WTC11 (cell line): ENCODE measurements at regions of chr3 and their contacts with region 1.

Region 1: DNA sequence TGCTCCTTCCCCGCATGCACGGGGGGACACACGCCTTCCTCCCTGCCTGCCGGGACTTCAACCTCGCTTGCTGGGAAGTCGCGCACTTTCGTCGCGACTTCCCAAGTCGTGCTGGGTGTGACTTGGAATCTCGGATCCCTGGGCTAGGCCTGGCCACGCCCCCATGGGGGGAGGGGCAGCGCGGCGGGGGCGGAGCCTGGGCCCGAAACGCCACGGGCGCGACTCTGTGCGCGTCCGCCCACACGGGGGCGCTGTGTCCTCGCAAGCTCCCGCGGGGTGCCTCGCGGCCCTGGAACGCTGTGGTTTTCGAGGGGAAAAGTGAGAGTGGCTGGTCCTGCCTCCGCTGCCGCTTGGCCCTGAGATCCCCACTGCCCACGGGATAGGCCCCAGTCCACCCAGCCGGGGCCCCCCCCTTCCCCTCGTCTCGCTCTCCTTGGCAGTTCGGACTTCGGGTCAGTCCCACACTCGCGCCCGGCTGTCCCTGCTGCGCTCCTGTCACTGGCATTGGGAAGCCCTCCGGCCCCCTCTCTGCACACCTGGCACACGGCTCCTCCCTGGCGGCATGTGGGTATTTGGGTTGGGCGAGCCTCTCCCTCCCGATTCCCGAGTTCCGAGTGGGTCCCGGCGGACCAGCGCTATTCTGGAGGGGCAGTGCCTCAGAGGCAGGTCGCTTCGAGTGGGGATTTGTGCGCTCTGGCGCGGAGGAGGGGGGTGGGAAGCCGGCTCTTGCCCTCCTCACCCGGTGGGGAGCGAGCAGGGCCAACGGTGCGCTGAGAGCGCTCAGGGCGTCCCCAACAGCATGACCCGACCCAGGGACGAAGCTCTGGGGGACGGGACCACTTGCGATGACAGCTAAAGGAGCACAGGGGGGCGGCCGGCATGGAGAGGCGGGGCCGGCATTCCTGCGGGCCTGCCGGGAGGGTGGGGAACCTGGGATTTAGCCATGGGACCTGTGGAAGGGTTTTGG is 23.6 kb downstream of the SEC61A1 start:
- DNase-seq: peak; percentile 91
- ATAC-seq: peak; percentile 79
- H3K4me3 Mint-ChIP-seq: peak overlapping the region; percentile 77
- H3K27ac Mint-ChIP-seq: peak overlapping the region; percentile 91
- H3K4me1 Mint-ChIP-seq: peaks cover 12% of the 10 kb centered on the region
- H3K27me3 Mint-ChIP-seq: no peaks in the 10 kb centered on the region; the same call in 1 of the 2 replicates
- CTCF ChIP-seq: peak; percentile 94

Region 2: DNA sequence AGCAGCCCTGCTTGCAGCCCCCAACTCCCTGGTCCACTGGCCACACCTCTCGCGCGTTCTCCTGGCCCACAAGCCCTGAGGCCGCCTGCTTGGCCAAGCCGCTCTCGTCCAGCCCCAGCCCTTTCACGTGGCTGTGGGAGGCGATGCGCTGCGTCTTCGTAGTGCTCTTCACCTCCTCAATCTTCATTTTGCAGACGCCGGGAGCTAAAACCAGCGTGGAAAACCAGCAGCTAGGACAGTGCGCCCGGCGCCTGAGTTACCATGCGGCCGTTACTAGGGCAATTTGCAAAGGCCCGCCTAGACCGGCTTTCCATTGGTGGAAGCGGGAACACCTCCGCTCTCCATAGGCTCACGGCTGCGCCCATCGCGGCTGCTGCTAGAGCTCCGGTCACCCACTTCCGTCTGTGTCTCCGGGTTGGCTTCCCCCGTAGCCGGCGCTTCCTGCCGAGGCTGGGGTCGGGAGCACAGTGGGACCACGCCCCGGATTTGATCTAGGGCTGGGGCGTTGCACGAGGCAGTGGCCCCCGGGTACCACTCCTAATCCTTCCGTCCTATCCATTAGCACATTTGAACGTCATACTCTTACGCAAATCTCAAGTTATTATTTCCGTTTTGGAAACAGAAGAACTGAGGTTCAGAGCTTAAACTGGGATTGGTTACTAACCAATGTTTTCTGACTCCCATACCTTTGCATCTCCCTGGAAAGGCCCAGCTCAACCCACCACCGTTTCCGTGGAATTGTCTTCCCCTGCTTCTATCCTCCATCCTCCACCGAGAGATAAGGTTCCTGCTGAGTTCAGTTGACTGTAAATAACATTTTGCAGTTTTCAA is 48.0 kb after region 1 on chr3 and contains the start of gene RUVBL1:
- CTCF ChIA-PET with region 1: interaction called, 14 read pairs
- POLR2A ChIA-PET with region 1: no interaction called
- DNase-seq: peak; percentile 98
- ATAC-seq: peak; percentile 99
- H3K4me3 Mint-ChIP-seq: peak within 1 kb of the TSS; percentile 97
- H3K27ac Mint-ChIP-seq: peak within 1 kb of the TSS; percentile 95
- H3K4me1 Mint-ChIP-seq: peaks cover 15% of the 10 kb centered on the region
- H3K27me3 Mint-ChIP-seq: peaks cover 11% of the 10 kb centered on the region
- CTCF ChIP-seq: no peak
- total RNA-seq, gene RUVBL1: 116 to 121 TPM (median 118 TPM) in 3 replicates